Naive thymus-derived CD4-positive, alpha-beta T cell (primary cell): ENCODE measurements at regions of chr15 and their contacts with region 1.

Region 1: DNA sequence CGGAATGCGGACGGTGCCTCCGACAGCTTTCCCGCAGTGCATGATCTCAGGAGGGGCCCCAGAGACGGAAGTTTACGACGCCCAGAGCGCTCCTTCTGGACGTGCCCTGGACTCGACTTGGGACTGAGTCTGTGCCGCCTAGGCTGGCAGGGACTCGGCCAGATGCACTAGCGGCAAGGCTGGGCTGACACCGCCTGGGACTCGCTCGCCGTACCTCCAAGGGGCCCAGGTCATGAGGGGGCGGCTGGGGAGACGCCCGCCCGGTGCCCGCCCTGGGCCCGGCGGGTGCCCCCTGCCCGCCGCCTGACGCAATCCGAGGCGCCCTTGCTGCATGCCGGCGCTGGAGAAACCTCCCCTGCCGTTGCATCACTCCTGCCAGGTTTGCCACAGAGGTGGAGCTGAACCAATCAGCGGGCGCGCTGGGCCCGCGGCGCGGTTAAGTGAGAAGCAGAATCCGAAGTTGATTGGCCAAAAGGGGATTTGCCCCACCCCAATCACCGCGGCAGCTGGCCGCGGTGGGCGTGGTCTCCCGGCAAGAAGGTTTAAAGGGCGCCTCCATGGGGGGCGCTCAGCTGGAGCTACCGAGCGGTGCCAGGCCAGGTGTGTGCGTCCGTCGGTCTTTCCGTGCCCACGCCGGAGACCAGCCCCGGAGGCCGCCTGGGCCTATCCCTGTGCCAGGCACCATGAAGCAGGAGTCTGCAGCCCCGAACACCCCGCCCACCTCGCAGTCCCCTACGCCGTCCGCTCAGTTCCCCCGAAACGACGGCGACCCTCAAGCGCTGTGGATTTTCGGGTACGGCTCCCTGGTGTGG is at the start of gene CHAC1:
- DNase-seq: peak; percentile 79 to 97 (median 94)
- ATAC-seq: peak; percentile 98
- H3K4me3 ChIP-seq: peak within 1 kb of the TSS; percentile 68
- H3K4me3 Mint-ChIP-seq: peak within 1 kb of the TSS; percentile 87 to 96 (median 94)
- H3K27ac ChIP-seq: peak within 1 kb of the TSS; percentile 74
- H3K27ac Mint-ChIP-seq: peak within 1 kb of the TSS in 8 of 9 donors; percentile 76 to 95 (median 88)
- H3K4me1 ChIP-seq: peaks cover 10 to 14% of the 10 kb centered on the region in 2 donors
- H3K4me1 Mint-ChIP-seq: peaks cover 7 to 34% (median 19%) of the 10 kb centered on the region in 7 donors
- H3K27me3 ChIP-seq: no peaks in the 10 kb centered on the region
- H3K27me3 Mint-ChIP-seq: peaks cover 0 to 4% (median 0%) of the 10 kb centered on the region in 5 donors
- total RNA-seq, gene CHAC1: 0.24 to 5.7 (median 1.1) TPM

Region 2: DNA sequence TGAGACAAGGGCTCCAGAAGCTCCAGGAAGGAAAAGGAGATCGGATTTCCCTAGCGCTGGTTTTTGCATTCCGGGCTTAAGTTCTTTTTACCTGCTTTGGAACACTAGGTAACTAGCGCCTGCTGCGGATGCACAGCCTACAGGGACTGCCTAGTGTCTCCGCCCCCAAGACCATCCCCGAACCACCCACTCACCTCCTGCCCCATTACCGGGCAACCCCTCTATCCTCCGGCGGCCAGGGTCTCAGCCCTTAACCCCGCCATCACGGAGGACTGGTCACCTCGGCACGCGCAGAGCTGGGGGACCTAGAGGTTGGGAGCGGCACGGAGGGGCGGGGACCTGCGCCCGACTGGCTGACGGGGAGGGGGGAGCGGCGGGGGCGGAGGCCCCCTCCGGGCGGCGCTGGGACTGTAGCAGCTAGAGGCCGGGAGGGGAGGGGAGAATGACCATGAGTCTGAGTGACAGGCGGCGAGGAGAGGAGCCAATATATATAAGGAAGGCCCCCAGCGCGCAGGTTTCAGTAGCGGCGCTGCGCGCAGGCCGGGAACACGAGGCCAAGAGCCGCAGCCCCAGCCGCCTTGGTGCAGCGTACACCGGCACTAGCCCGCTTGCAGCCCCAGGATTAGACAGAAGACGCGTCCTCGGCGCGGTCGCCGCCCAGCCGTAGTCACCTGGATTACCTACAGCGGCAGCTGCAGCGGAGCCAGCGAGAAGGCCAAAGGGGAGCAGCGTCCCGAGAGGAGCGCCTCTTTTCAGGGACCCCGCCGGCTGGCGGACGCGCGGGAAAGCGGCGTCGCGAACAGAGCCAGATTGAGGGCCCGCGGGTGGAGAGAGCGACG is 24.1 kb before region 1 on chr15 and contains the start of gene DLL4:
- CTCF ChIA-PET with region 1: no interaction called
- POLR2A ChIA-PET with region 1: interaction called, 4 read pairs
- intact Hi-C with region 1: loop called (anchors 1 kb)
- DNase-seq: peak in 6 of 9 donors; percentile 36 to 54 (median 48)
- ATAC-seq: peak; percentile 56
- H3K4me3 ChIP-seq: peak within 1 kb of the TSS; percentile 68
- H3K4me3 Mint-ChIP-seq: peak within 1 kb of the TSS; percentile 80 to 96 (median 83)
- H3K27ac ChIP-seq: no peak within 1 kb of the TSS
- H3K27ac Mint-ChIP-seq: peak within 1 kb of the TSS in 2 of 9 donors; percentile 32 to 55
- H3K4me1 ChIP-seq: peaks cover 19 to 54% of the 10 kb centered on the region in 2 donors
- H3K4me1 Mint-ChIP-seq: peaks cover 27 to 53% (median 49%) of the 10 kb centered on the region in 7 donors
- H3K27me3 ChIP-seq: peaks cover 5 to 43% of the 10 kb centered on the region in 2 donors
- H3K27me3 Mint-ChIP-seq: peaks cover 53 to 80% (median 56%) of the 10 kb centered on the region in 5 donors
- total RNA-seq, gene DLL4: not detected

Region 3: GRCh38 chr15:41079717-41080116 is 126.6 kb after region 1 on chr15:
- CTCF ChIA-PET with region 1: no interaction called
- POLR2A ChIA-PET with region 1: no interaction called
- intact Hi-C with region 1: no loop called
- DNase-seq: no peak
- ATAC-seq: no peak
- H3K4me3 ChIP-seq: no peak overlapping the region
- H3K4me3 Mint-ChIP-seq: no peak overlapping the region
- H3K27ac ChIP-seq: no peak overlapping the region
- H3K27ac Mint-ChIP-seq: peak overlapping the region in 2 of 9 donors; percentile 6 to 54
- H3K4me1 ChIP-seq: no peaks in the 10 kb centered on the region
- H3K4me1 Mint-ChIP-seq: peaks cover 0 to 1% (median 0%) of the 10 kb centered on the region in 7 donors
- H3K27me3 ChIP-seq: no peaks in the 10 kb centered on the region
- H3K27me3 Mint-ChIP-seq: no peaks in the 10 kb centered on the region

Region 4: GRCh38 chr15:41331833-41332787 is 379.0 kb after region 1 on chr15 and contains the start of gene OIP5:
- CTCF ChIA-PET with region 1: no interaction called
- POLR2A ChIA-PET with region 1: no interaction called
- intact Hi-C with region 1: loop called in 1 of 2 experiments (anchors 2 kb)
- DNase-seq: peak; percentile 83 to 99 (median 97)
- ATAC-seq: peak; percentile 98
- H3K4me3 ChIP-seq: peak within 1 kb of the TSS; percentile 95
- H3K4me3 Mint-ChIP-seq: peak within 1 kb of the TSS; percentile 87 to 100 (median 97)
- H3K27ac ChIP-seq: peak within 1 kb of the TSS; percentile 52
- H3K27ac Mint-ChIP-seq: peak within 1 kb of the TSS; percentile 77 to 97 (median 91)
- H3K4me1 ChIP-seq: peaks cover 9 to 13% of the 10 kb centered on the region in 2 donors
- H3K4me1 Mint-ChIP-seq: peaks cover 12 to 32% (median 29%) of the 10 kb centered on the region in 7 donors
- H3K27me3 ChIP-seq: no peaks in the 10 kb centered on the region
- H3K27me3 Mint-ChIP-seq: no peaks in the 10 kb centered on the region
- total RNA-seq, gene OIP5: 0.32 to 15.2 (median 0.54) TPM in 4 of 5 experiments, not detected in the other